SK-N-SH (cell line): ENCODE measurements at regions of chr10 and their contacts with region 1.

Region 1: DNA sequence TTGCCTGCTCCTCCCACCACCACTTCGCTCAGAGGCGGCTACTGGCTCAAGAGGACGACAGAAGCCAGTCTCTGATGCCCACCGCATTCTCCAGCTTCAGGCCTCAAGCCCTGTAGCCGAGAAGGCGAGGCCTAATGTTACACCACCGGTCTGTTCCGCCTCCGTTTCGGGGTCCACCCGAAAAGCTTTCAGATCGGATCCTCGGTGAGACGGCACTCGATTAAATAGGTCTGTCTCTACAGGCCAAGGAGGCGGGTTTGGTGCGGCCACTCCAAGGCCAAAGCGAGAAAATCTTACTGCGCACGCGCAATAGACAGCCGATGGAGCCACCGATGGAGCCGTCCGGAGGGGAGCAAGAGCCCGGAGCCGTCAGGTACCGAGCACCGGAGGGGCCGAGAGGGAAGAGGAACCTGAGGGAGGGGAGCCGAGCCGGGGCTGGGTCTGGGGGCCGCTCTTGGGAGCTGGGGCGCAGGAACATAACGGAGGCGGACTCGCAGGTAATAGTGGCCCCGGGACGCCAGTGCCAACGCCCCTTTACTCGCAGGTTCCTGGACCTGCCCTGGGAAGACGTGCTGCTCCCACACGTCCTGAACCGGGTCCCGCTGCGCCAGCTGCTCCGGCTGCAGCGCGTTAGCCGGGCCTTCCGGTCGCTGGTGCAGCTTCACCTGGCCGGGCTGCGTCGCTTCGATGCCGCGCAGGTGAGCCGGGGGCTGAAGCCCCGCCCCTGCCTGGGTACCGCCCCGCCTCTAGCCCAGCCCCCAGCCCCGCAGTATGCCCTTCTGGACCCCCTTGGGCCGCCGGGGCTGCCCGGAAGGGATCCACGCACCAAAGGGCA is at the start of gene FBXL15:
- DNase-seq: peak; percentile 91
- H3K4me3 ChIP-seq: peak within 1 kb of the TSS; percentile 77 to 90
- H3K27ac ChIP-seq: peak within 1 kb of the TSS; percentile 78 to 99
- H3K4me1 ChIP-seq: peaks cover 0 to 29% of the 10 kb centered on the region in 2 experiments; a peak in 2 of 4 replicates
- H3K27me3 ChIP-seq: no peaks in the 10 kb centered on the region
- CTCF ChIP-seq: no peak
- EP300 ChIP-seq: no peak
- RAD21 ChIP-seq: no peak
- polyA plus RNA-seq, gene FBXL15: 11.7 and 17.2 TPM in 2 replicates

Region 2: GRCh38 chr10:102322914-102323313 is 98.1 kb before region 1 on chr10:
- CTCF ChIA-PET with region 1: no interaction called
- POLR2A ChIA-PET with region 1: no interaction called
- DNase-seq: no peak
- H3K4me3 ChIP-seq: no peak overlapping the region
- H3K27ac ChIP-seq: no peak overlapping the region
- H3K4me1 ChIP-seq: no peaks in the 10 kb centered on the region; a peak in 1 of 4 replicates
- H3K27me3 ChIP-seq: no peaks in the 10 kb centered on the region
- CTCF ChIP-seq: no peak
- EP300 ChIP-seq: no peak
- RAD21 ChIP-seq: no peak

Region 3: DNA sequence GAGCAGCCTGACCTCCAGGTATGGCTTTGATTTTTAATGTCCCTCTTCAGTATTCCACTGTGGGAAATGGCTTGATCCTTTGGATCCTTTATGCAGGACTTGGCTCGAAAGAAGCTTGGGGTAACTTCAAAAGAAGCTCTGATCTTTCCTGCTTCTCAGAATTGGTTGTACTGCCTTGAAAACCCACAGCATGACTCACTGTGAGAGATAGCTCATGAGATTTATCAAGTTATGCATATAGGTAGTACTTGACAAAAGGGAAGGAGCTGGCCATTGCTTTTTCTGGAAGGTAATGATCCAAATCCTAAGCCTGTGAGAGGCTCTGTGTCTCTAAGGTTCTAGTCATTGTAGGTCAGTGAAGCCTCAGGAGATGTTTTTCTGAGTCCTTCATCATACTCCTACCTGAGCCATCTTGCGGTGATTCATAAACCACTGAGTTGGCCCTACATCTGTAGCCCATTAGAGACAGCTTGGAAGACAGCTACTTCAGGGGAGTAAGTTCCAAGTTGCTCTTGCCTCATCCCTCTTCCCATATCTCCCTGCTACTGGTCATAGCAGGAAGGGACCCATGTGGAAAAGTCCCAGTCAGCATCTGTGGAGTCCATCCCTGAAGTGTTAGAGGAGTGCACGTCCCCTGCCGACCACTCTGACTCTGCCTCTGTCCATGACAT is 62.2 kb before region 1 on chr10:
- CTCF ChIA-PET with region 1: no interaction called
- POLR2A ChIA-PET with region 1: no interaction called
- DNase-seq: no peak
- H3K4me3 ChIP-seq: no peak overlapping the region
- H3K27ac ChIP-seq: no peak overlapping the region
- H3K4me1 ChIP-seq: no peaks in the 10 kb centered on the region
- H3K27me3 ChIP-seq: no peaks in the 10 kb centered on the region
- CTCF ChIP-seq: no peak
- EP300 ChIP-seq: no peak
- RAD21 ChIP-seq: no peak

Region 4: GRCh38 chr10:102394079-102394800 is 26.8 kb before region 1 on chr10:
- CTCF ChIA-PET with region 1: interaction called, 359 read pairs
- POLR2A ChIA-PET with region 1: interaction called, 11 read pairs
- DNase-seq: peak; percentile 92
- H3K4me3 ChIP-seq: peak overlapping the region; percentile 65 to 77
- H3K27ac ChIP-seq: peak overlapping the region; percentile 47 to 81; a peak in 3 of 4 replicates
- H3K4me1 ChIP-seq: peaks cover 0 to 17% of the 10 kb centered on the region in 2 experiments; a peak in 1 of 4 replicates
- H3K27me3 ChIP-seq: no peaks in the 10 kb centered on the region
- CTCF ChIP-seq: no peak; the same call in 1 of the 2 replicates
- EP300 ChIP-seq: no peak
- RAD21 ChIP-seq: no peak

Region 5: DNA sequence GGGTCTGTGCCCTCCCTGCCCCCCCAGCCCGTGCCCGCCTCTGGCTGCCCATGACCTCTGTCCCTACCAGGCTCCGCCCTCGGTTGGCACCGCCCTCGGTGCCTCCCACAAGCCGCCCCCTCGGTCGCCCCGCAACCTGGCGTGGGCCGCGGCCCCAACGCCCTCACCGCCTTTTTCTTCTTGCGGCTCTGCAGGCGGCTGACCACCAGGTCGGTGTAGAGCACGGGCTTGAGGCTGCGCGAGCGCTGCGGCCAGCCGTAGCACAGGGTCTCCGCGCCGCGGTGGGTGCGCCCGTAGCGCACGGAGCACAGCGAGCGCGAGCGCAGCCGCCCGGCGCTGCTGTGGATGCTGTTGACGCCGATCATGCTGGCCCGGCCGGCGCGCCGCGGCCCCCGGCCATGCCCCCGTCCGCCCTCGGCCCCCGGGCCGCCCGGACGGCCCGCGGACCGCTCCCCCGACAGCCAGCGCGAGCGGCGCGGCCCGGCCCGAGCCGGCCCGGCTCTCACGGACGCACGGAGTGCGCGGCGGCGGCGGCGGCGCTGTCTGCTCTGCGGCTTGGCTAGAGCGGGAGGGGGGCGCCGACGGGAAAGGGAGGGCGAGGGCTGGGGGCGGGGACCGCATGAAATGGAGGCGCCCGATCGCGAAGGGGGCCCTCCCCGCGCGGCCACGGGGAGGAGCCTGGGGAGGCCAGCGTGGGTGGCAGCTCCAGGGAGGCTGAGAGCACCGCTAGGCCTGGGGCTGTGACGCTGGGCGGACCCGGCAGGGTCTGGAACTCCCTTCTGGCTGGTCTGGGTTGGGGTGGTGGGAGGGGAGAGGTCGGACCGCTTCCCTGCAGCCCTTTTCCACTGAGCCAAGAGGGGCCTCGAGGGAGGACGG is 12.1 kb before region 1 on chr10:
- CTCF ChIA-PET with region 1: interaction called, 359 read pairs
- POLR2A ChIA-PET with region 1: interaction called, 5 read pairs
- DNase-seq: peak; percentile 91
- H3K4me3 ChIP-seq: peak overlapping the region; percentile 51 to 61
- H3K27ac ChIP-seq: peak overlapping the region in 1 of 2 experiments; percentile 56; a peak in 2 of 4 replicates
- H3K4me1 ChIP-seq: peaks cover 0 to 31% of the 10 kb centered on the region in 2 experiments; a peak in 2 of 4 replicates
- H3K27me3 ChIP-seq: no peaks in the 10 kb centered on the region
- CTCF ChIP-seq: no peak
- EP300 ChIP-seq: no peak
- RAD21 ChIP-seq: no peak

Region 6: DNA sequence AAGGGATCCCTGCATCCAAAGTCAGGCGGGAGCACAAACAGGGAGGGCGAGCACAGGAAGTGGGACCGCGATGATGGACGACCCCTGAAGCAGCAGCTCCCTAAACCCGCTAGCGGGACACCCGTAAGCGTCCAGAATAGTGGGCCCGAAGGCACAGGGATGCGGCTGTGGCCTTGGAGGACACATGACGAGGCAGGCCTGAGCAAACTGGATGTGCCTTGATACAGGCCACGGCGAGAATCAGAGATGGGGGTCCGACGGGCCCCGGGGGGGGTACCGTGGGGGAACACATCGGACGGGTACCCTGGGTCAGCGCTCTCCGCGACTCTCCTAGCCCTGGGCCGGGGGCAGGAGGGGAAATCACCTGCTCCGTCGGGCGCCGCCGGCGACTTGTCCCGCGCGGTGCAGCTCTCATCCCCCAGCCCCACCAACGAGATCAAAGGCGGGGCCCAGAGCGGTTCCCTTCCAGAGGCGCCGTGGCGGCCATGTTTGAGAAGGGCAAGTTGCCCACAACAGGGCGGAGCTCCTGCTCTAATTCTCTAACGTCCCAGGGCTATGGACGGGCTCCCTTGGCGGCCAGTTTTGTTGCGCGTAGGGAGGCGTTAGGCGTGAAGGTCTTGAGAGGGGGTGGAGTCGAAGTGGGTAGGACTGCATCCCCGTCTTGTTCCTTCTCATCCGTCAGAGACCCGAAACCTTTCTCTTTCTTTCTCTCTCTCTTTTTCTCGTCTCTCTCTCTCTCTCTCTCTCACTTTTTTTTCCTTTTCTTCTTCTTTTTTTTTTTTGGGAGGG is 11.3 kb after region 1 on chr10 and contains the start of gene CUEDC2:
- CTCF ChIA-PET with region 1: interaction called, 26 read pairs
- POLR2A ChIA-PET with region 1: interaction called, 41 read pairs
- DNase-seq: peak; percentile 94
- H3K4me3 ChIP-seq: peak within 1 kb of the TSS; percentile 82 to 93
- H3K27ac ChIP-seq: peak within 1 kb of the TSS; percentile 55 to 80; a peak in 3 of 4 replicates
- H3K4me1 ChIP-seq: peaks cover 0 to 6% of the 10 kb centered on the region in 2 experiments; a peak in 1 of 4 replicates
- H3K27me3 ChIP-seq: no peaks in the 10 kb centered on the region
- CTCF ChIP-seq: no peak
- EP300 ChIP-seq: peak in 1 of 2 experiments; percentile 8; a peak in 1 of 4 replicates
- RAD21 ChIP-seq: no peak
- polyA plus RNA-seq, gene CUEDC2: 130 and 162 TPM in 2 replicates

Region 7: GRCh38 chr10:102450194-102450938 is 29.3 kb after region 1 on chr10:
- CTCF ChIA-PET with region 1: interaction called, 25 read pairs
- POLR2A ChIA-PET with region 1: interaction called, 6 read pairs
- DNase-seq: peak; percentile 95
- H3K4me3 ChIP-seq: peak overlapping the region; percentile 62 to 71
- H3K27ac ChIP-seq: peak overlapping the region in 1 of 2 experiments; percentile 66; a peak in 2 of 4 replicates
- H3K4me1 ChIP-seq: peaks cover 0 to 10% of the 10 kb centered on the region in 2 experiments; a peak in 2 of 4 replicates
- H3K27me3 ChIP-seq: no peaks in the 10 kb centered on the region
- CTCF ChIP-seq: no peak
- EP300 ChIP-seq: no peak
- RAD21 ChIP-seq: no peak